ENCODE measurements at regions of chr19 and their contacts with region 1.

Region 1: GRCh38 chr19:6110360-6110977 is at the start of gene RFX2:
- DNase-seq: peak; percentile 99
- ATAC-seq: peak; percentile 97
- H3K4me3 ChIP-seq: peak within 1 kb of the TSS; percentile 6 to 79
- H3K27ac ChIP-seq: peak within 1 kb of the TSS; percentile 95 to 99
- H3K4me1 ChIP-seq: no peaks in the 10 kb centered on the region
- H3K27me3 ChIP-seq: no peaks in the 10 kb centered on the region
- total RNA-seq, gene RFX2: 16.6 to 26.1 TPM

Region 2: GRCh38 chr19:6056801-6057650 is 53.4 kb before region 1 on chr19:
- intact Hi-C with region 1: loop called (anchors 2 to 5 kb)
- DNase-seq: peak; percentile 90 to 92
- ATAC-seq: peak; percentile 88
- H3K4me3 ChIP-seq: no peak overlapping the region
- H3K27ac ChIP-seq: peak overlapping the region; percentile 76 to 88
- H3K4me1 ChIP-seq: peaks cover 3 to 5% of the 10 kb centered on the region in 2 donors
- H3K27me3 ChIP-seq: no peaks in the 10 kb centered on the region

Region 3: GRCh38 chr19:6092329-6093286 is 17.9 kb before region 1 on chr19:
- intact Hi-C with region 1: loop called in 1 of 2 experiments (anchors 2 kb)
- DNase-seq: peak; percentile 92 to 95
- ATAC-seq: peak; percentile 92
- H3K4me3 ChIP-seq: no peak overlapping the region
- H3K27ac ChIP-seq: peak overlapping the region; percentile 86 to 91
- H3K4me1 ChIP-seq: no peaks in the 10 kb centered on the region
- H3K27me3 ChIP-seq: no peaks in the 10 kb centered on the region

Measured in aorta (tissue), 5 donors.